GM23248 (cell line): ENCODE measurements at regions of chrX and their contacts with region 1.

Region 1: DNA sequence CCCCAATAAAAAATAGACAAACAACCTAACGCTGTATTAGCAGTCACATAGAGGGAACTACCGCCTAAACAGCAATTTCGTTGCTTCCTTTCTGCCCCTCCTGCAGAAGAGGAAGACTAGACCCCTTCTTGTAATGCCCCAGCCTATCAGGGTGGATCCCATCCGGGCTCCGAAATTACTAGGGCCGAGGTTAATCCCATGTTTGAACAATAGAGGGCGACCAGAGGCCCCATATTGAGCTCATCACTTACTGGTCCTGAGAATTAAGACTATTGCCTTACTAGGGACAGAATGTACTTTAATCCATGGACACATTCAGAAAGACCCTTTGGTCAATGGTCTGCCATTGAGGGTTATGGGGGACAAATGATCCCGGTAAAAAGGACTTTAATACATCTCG is 11.8 kb upstream of the ZNF630 start:
- DNase-seq: peak; percentile 61
- H3K4me3 ChIP-seq: no peak overlapping the region
- H3K27ac ChIP-seq: no peak overlapping the region
- H3K4me1 ChIP-seq: no peaks in the 10 kb centered on the region
- H3K27me3 ChIP-seq: no peaks in the 10 kb centered on the region

Region 2: DNA sequence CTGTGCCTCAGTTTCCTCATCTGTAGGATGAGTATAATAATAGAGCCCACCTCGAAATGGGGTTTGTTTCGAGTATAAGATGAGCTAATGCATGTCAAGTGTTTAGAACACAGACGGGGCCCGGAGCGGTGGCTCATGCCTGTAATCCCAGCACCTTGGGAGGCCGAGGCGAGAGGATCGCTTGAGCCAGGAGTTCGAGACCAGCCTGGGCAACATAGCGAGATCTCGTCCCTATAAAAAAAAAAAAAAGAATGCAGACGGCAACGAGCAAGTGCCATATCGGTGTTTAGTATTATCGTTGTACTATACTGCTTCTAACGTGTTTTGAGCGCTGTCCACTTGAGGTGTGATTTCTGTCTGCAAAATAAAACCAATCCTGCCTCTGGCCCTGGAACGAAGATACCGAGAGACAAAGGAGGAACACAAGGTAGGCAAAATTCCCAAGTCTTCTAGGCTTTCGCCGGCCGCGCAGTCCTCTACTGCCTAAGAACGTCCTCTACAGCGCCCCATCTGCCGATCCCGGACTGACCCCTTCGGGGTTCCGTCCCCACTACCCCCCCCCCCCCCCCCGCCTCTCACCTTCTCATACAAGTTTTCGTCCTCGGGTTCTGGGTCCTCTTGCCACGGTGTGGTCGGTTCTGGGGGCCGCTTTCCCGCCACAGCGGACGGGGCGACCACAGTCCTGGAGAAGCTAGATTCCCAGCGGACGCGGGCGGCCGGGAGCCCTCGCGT is 939.2 kb before region 1 on chrX:
- in situ Hi-C with region 1: no loop called
- DNase-seq: peak; percentile 60
- H3K4me3 ChIP-seq: peak overlapping the region; percentile 97
- H3K27ac ChIP-seq: peak overlapping the region; percentile 91
- H3K4me1 ChIP-seq: no peaks in the 10 kb centered on the region; the same call in none of the 2 replicates
- H3K27me3 ChIP-seq: no peaks in the 10 kb centered on the region

Region 3: GRCh38 chrX:47743504-47743903 is 339.7 kb before region 1 on chrX:
- in situ Hi-C with region 1: no loop called
- DNase-seq: peak; percentile 65
- H3K4me3 ChIP-seq: no peak overlapping the region
- H3K27ac ChIP-seq: peak overlapping the region; percentile 30
- H3K4me1 ChIP-seq: no peaks in the 10 kb centered on the region; the same call in 1 of the 2 replicates
- H3K27me3 ChIP-seq: no peaks in the 10 kb centered on the region

Region 4: DNA sequence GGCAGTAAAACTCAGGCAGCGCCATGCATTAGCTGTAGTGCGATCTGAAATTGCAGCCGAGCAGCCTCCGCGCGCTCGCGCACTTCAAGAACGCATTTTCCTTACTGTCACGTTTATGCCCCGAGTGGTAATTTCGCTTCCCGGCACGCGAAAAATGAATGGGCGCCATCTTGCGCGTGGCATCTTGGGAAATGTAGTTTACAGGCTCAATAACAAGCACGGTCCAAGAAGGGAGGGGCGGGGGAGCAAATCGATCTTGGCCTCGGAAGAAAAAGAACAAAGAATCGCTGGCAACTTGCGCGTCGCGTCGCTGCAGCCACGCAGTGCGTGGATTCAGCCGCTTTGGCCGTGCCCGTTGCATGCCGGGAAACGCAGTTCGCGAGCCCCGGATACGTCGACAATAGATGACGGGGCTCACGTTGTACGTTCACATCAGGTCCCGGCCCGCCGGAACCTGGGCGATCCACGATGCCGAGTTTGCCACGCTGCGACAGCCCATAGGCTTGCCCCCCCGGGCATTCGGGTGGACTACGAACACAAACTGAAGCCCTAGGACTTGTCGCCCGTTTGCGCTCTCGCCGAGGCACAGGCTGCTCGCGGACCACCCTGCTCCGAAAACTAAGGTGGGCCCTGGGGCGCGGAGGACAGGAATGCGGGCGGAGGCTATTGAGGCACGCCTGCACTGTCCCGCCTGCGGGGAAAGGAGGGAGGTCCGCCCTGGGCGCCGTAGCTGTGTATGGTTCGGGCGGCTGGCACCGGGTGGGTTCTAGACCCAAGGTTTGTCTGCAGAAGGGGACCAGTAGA is 392.8 kb after region 1 on chrX and contains the start of gene FTSJ1:
- in situ Hi-C with region 1: loop called (anchors 25 kb)
- DNase-seq: peak; percentile 93
- H3K4me3 ChIP-seq: peak within 1 kb of the TSS; percentile 94
- H3K27ac ChIP-seq: peak within 1 kb of the TSS; percentile 73
- H3K4me1 ChIP-seq: no peaks in the 10 kb centered on the region
- H3K27me3 ChIP-seq: no peaks in the 10 kb centered on the region
- total RNA-seq, gene FTSJ1: 95.2 and 152 TPM in 2 replicates